GM18951 (cell line): ENCODE measurements at regions of chr16 and their contacts with region 1.

Region 1: GRCh38 chr16:50065624-50066481 is at the start of gene HEATR3:
- POLR2A ChIP-seq: peak; percentile 82

Region 2: DNA sequence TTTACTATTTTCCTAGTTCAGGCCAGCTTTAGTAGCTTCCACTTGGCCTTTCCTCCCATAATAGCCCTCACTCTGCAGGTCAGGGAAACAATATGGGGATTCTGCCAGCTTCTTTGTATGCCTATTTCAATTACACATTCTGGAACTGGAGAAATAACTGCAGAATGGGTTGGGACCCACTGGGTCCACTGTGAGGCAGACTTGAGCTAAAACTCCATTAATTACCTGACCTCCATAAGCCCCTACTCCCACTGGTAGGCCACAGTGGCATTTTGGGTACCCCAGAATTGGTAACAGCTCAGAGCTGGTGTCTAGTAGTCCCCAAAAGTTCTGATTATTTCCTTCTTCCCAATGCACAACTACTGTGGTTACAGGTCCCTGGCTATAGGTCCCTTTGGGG is 70.5 kb after region 1 on chr16:
- in situ Hi-C with region 1: no loop called
- POLR2A ChIP-seq: no peak

Region 3: GRCh38 chr16:50202926-50203624 is 137.2 kb after region 1 on chr16:
- in situ Hi-C with region 1: loop called (anchors 10 kb)
- POLR2A ChIP-seq: no peak